Thyroid gland (tissue), 4 donors: ENCODE measurements at regions of chr13 and their contacts with region 1.

Region 1: DNA sequence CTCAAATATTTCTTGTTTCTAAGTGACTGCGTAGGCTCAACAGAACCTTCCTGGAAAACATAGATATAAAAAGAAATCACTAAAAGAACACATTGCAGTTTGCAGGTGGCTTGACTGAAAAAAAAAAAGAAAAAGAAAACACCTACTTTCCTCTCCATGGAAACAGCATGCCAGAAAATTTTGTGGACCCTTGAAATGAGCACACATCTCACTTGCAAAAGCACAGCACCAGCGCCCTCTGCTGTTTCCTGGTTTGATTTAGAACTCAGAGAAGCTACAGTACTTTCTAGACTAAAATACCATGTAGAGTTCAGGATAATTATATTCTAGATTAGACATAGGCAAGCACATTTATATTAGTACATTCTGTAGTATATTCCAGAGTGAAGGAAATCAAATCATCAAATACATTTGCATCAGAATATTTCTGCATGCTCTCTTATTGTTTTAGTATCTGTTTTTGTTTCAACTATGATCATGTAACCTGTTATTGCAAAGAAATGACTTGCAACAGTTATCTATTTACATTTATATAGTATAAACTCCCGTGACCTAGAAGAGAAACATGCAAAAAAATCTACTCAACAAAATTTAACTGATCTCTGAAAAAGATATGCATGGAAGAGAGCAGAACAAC is 22.3 kb upstream of the XPO4 start:
- DNase-seq: peak; percentile 94
- H3K4me3 ChIP-seq: no peak overlapping the region
- H3K27ac ChIP-seq: no peak overlapping the region
- H3K4me1 ChIP-seq: no peaks in the 10 kb centered on the region
- H3K27me3 ChIP-seq: no peaks in the 10 kb centered on the region
- CTCF ChIP-seq: peak; percentile 61 to 87 (median 78)
- POLR2A ChIP-seq: no peak

Region 2: DNA sequence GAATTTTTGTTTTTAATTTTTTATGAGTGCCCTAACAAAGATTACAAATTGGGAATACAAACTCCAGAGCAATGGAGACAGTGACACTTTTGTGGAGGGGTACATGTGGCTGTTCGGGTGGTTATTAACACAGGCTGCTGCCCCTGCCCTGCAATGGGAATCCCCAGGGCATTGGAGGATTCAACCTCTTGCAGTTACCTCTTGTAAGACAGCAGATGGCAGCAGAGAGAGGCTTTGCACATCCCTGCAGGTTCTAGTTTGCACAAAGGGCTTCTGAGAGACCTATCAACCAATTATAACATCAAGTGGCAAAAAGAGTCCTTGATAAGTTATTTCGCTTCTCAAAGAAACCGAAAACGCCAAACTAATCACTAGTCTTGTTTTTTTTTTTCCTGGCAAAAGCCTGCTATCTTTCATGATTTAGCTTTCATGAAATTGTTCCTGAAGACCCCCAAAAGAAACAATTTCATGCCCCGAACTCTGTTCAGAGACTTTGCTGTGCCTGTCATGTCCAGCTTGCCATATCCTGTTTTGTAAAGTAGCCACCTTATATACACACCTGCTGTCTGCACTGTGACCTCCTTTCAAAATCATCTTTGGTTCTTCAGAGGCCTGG is 742.5 kb before region 1 on chr13:
- intact Hi-C with region 1: loop called (anchors 10 kb)
- DNase-seq: peak; percentile 49 to 54
- H3K4me3 ChIP-seq: no peak overlapping the region
- H3K27ac ChIP-seq: no peak overlapping the region
- H3K4me1 ChIP-seq: no peaks in the 10 kb centered on the region
- H3K27me3 ChIP-seq: no peaks in the 10 kb centered on the region
- CTCF ChIP-seq: peak; percentile 28 to 86 (median 81)
- POLR2A ChIP-seq: no peak

Region 3: DNA sequence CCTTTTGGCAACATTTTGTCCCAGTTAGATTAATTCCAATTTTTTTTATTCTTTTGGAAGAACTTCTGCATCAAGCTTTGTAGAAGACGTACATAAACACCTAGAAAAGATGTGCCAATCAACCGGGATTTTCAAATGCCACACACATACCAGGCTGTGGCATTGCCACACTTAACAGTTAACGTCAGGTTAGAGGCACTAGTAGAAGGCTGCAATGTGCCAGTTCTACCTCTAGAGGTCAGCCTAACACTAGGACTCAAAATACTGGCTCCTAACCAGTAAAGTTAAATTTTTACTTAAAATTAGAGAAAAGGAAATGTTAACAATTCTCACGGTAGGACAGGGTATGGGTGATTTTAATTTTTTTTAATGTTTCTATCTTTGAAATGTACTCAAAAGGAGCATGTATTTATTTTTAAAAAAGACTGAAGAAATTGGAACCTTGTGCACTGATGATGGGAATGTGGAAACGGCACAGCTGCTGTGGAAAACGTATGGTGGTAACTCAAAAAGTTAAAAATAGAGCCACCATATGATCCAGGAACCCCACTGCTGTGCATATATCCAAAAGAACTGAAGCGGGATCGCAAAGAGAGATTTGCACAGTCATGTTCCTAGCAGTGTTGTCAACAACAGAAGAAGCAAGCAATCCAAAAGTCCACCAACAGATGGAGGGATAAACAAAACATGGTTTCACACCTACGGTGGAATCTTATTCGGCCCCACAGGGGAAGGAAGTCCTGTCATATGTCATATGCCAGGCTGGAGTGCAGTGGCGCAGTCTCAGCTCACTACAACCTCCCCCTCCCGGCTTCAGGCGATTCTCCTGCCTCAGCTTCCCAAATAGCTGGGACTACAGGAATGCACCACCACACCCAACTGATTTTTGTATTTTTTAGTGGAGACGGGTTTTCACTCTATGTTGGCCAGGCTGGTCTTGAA is 429.5 kb before region 1 on chr13:
- intact Hi-C with region 1: loop called (anchors 5 kb)
- DNase-seq: peak; percentile 64
- H3K4me3 ChIP-seq: no peak overlapping the region
- H3K27ac ChIP-seq: no peak overlapping the region
- H3K4me1 ChIP-seq: no peaks in the 10 kb centered on the region
- H3K27me3 ChIP-seq: no peaks in the 10 kb centered on the region
- CTCF ChIP-seq: peak; percentile 81 to 93 (median 88)
- POLR2A ChIP-seq: no peak